ENCODE measurements at regions of chr16 and their contacts with region 1.

Region 1: DNA sequence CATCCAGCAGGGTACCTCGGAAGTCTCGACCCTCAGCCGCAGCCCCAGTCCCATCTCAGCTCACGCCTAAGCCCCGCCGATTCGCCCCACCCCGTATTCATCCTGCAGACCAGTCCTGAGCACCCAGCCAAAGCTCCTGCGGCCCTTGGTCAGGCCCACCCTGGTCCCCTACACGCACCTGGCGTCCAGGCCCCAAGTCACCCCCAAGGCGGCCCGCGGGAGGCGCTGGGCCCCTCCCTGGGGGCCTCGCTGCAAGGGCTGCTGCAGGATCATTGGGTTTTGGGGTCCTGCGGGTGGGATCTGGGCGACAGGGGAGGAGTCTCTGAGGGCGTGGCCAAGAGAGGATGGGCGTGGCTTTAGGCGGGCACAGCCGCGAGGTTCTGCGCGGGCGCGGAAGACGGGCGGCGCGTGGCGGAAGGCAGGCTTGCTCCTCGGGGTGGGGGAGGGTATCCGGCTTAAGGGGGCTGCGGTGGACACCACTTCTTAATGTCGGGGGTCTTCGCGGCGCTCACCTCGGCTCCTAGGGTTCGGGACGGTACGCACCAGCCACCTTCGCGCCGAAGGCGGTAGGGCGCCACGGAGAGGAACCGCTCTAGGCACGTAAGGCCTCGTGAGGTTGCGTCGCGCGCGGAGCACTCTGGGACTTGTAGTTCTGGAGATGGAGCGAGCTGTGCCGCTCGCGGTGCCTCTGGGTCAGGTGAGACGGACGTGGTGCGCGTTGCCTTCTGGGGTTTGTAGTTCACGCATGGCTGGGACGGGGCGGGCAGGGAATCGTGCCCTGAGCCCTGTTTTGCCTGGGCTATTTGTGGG is at the starts of genes HCFC1R1 and THOC6:
- DNase-seq: peak; percentile 98
- ATAC-seq: peak; percentile 47
- H3K4me3 Mint-ChIP-seq: peak within 1 kb of the TSS; percentile 86
- H3K27ac Mint-ChIP-seq: peak within 1 kb of the TSS; percentile 99
- H3K4me1 Mint-ChIP-seq: peaks cover 37% of the 10 kb centered on the region
- H3K27me3 Mint-ChIP-seq: peaks cover 2% of the 10 kb centered on the region; the same call in 1 of the 2 replicates
- CTCF ChIP-seq: no peak
- total RNA-seq, gene HCFC1R1: 76.0 to 84.0 TPM (median 83.2 TPM) in 3 replicates
- total RNA-seq, gene THOC6: 76.5 to 94.2 TPM (median 88.7 TPM) in 3 replicates

Region 2: GRCh38 chr16:2990891-2991290 is 33.0 kb before region 1 on chr16:
- CTCF ChIA-PET with region 1: interaction called, 12 read pairs
- POLR2A ChIA-PET with region 1: interaction called, 3 read pairs
- DNase-seq: no peak
- ATAC-seq: peak; percentile 32
- H3K4me3 Mint-ChIP-seq: no peak overlapping the region
- H3K27ac Mint-ChIP-seq: no peak overlapping the region
- H3K4me1 Mint-ChIP-seq: peaks cover 21% of the 10 kb centered on the region
- H3K27me3 Mint-ChIP-seq: no peaks in the 10 kb centered on the region
- CTCF ChIP-seq: no peak

Region 3: DNA sequence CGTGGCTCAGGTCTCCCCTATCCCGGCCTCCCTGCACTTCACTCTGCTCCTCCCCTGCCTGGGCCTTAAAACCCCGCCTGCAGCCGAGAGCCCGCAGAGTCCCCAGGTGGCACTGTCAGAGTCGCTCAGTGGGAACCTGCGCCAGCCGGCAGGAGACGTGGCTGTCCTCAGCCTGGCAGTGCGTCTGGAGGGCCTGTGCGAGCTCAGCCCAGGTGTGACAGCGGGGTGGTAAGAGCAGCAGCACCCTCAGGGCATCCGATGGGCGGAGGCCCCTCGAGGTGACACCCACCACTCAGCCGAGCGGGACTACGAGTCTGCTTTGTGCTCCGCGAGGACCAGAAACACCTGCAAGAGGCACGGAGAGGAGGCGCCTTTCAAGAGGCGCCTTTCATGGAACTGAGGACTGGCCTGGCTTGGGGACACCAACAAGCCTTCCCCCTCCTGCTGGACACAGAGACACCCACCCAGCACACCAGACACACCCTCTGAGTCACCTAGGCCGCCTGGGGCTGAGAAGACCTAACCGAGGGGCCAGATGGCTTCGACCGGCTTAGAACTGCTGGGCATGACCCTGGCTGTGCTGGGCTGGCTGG is 10.9 kb before region 1 on chr16 and contains the start of gene CLDN9:
- CTCF ChIA-PET with region 1: interaction called, 360 read pairs
- POLR2A ChIA-PET with region 1: interaction called, 502 read pairs
- DNase-seq: peak; percentile 69
- ATAC-seq: peak; percentile 1; the same call in 1 of the 2 replicates
- H3K4me3 Mint-ChIP-seq: peak within 1 kb of the TSS; percentile 70
- H3K27ac Mint-ChIP-seq: peak within 1 kb of the TSS; percentile 69
- H3K4me1 Mint-ChIP-seq: peaks cover 72% of the 10 kb centered on the region
- H3K27me3 Mint-ChIP-seq: peaks cover 3% of the 10 kb centered on the region; the same call in 1 of the 2 replicates
- CTCF ChIP-seq: no peak
- total RNA-seq, gene CLDN9: 0.87 to 1.1 TPM (median 0.92 TPM) in 3 replicates

Region 4: GRCh38 chr16:3065069-3065741 is 41.3 kb after region 1 on chr16 and contains the start of gene IL32:
- CTCF ChIA-PET with region 1: interaction called, 109 read pairs
- POLR2A ChIA-PET with region 1: interaction called, 4 read pairs
- DNase-seq: no peak
- ATAC-seq: no peak; the same call in 1 of the 2 replicates
- H3K4me3 Mint-ChIP-seq: no peak within 1 kb of the TSS
- H3K27ac Mint-ChIP-seq: peak within 1 kb of the TSS; percentile 88
- H3K4me1 Mint-ChIP-seq: peaks cover 24% of the 10 kb centered on the region
- H3K27me3 Mint-ChIP-seq: no peaks in the 10 kb centered on the region
- CTCF ChIP-seq: no peak
- total RNA-seq, gene IL32: 3.5 to 4.7 TPM (median 3.6 TPM) in 3 replicates

Region 5: DNA sequence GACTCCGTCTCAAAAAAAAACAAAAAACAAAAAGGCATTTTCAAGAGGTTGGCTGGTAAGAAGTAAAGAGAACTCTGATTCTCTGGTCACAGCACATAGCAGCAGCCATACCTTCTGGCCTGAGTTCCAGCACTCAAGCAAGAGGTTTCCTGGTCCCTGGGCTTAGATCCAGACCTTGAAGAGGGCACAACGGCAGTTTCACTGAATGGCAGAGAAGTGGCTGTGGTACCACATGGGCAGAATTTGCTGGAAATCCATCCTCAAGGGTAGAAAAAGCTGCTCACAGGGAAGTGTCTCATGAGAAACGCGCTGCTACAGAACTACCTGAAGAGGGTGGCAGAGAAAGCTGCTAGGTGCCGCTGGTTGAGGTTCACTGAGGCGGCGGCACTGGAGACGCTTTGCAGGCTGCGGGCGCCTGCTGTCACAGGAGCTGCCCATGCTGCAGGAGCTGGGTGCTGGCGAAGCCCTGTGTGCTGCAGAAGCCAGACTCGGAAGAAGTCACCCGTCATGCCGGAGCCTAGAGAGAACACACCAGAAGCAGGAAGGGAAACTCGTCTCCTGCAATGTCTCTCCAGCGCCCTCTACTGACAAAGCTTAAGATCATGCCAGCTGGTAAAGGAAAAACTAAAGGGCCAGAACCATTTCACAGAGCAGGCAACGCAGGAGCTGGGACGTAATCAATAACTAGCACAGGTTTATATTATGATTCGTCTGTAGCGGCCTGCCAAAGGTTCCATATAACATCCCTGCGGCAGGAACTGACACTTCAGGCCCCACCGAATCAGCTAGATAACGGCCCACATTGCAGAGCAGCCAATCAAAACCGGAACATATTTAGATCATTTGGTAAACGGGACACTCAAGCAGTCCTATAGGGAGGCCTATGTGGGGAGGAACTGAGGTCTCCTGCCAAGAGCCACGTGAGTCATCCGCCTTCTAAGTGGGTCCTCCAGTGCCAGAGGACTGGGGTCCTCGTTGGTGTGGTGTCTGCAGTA is 105.6 kb after region 1 on chr16:
- CTCF ChIA-PET with region 1: interaction called, 19 read pairs
- POLR2A ChIA-PET with region 1: interaction called, 5 read pairs
- DNase-seq: peak; percentile 69
- ATAC-seq: peak; percentile 58
- H3K4me3 Mint-ChIP-seq: peak overlapping the region; percentile 45
- H3K27ac Mint-ChIP-seq: peak overlapping the region; percentile 95
- H3K4me1 Mint-ChIP-seq: peaks cover 42% of the 10 kb centered on the region
- H3K27me3 Mint-ChIP-seq: no peaks in the 10 kb centered on the region
- CTCF ChIP-seq: peak; percentile 87

Region 6: GRCh38 chr16:3188925-3189825 is 165.3 kb after region 1 on chr16:
- CTCF ChIA-PET with region 1: interaction called, 10 read pairs
- POLR2A ChIA-PET with region 1: interaction called, 5 read pairs
- DNase-seq: peak; percentile 80
- ATAC-seq: peak; percentile 35
- H3K4me3 Mint-ChIP-seq: peak overlapping the region; percentile 97
- H3K27ac Mint-ChIP-seq: no peak overlapping the region; the same call in 1 of the 2 replicates
- H3K4me1 Mint-ChIP-seq: peaks cover 18% of the 10 kb centered on the region
- H3K27me3 Mint-ChIP-seq: peaks cover 61% of the 10 kb centered on the region
- CTCF ChIP-seq: no peak